ENCODE measurements at regions of chr3 and their contacts with region 1.

Region 1: GRCh38 chr3:160163229-160163878 is 61.9 kb upstream of the C3orf80 start:
- DNase-seq: no peak
- ATAC-seq: no peak

Region 2: DNA sequence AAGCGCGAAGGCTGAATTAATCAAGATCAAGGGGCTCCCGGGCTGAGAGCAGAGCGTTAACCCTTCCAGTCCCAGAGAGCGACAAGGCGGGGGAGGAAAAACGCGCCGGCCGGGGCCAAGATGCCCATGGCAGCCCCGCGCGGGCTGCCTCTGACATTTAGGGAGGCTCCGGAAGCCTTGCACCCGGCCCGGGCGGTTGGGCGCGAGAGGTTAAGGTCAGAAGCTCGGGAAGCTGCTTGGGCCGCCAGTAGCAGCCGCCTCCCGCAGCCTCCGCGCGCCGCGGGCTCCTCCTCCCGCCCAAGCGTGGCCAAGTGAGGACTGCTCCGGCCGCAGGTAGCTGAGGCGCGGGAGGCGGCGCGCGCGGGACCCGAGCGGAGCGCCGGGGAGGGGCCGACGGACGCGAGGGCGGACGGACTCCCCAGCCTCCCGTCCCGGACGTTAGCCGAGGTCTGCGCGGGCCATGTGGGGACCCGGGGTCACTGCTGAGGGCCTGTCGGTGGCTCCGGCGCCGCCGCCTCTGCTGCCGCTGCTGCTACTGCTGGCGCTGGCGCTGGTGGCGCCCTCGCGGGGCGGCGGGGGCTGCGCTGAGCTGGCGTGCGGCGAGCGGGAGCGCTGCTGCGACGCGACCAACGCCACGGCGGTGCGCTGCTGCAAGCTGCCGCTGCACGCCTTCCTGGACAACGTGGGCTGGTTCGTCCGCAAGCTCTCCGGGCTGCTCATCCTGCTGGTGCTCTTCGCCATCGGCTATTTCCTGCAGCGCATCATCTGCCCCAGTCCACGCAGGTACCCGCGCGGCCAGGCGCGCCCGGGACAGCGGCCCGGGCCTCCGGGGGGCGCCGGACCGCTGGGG is 62.0 kb after region 1 on chr3 and contains the start of gene C3orf80:
- intact Hi-C with region 1: no loop called
- DNase-seq: peak; percentile 65
- ATAC-seq: peak; percentile 89
- total RNA-seq, gene C3orf80: 0.15 TPM

Region 3: GRCh38 chr3:160343132-160343531 is 179.8 kb after region 1 on chr3:
- intact Hi-C with region 1: loop called (anchors 5 kb)
- DNase-seq: no peak
- ATAC-seq: no peak